Esophagus squamous epithelium (tissue), 5 donors: ENCODE measurements at regions of chr5 and their contacts with region 1.

Region 1: GRCh38 chr5:169980418-169981053 is at the start of gene INSYN2B:
- DNase-seq: no peak
- H3K4me3 ChIP-seq: peak within 1 kb of the TSS in 1 of 4 donors; percentile 45
- H3K27ac ChIP-seq: no peak within 1 kb of the TSS
- H3K4me1 ChIP-seq: peaks cover 0 to 5% (median 4%) of the 10 kb centered on the region in 3 donors
- H3K27me3 ChIP-seq: peaks cover 0 to 36% (median 0%) of the 10 kb centered on the region in 4 donors
- CTCF ChIP-seq: peak in 5 of 6 experiments; percentile 30 to 54 (median 49)
- POLR2A ChIP-seq: no peak
- total RNA-seq, gene INSYN2B: 0.09 TPM in 1 of 4 donors, not detected in the others

Region 2: DNA sequence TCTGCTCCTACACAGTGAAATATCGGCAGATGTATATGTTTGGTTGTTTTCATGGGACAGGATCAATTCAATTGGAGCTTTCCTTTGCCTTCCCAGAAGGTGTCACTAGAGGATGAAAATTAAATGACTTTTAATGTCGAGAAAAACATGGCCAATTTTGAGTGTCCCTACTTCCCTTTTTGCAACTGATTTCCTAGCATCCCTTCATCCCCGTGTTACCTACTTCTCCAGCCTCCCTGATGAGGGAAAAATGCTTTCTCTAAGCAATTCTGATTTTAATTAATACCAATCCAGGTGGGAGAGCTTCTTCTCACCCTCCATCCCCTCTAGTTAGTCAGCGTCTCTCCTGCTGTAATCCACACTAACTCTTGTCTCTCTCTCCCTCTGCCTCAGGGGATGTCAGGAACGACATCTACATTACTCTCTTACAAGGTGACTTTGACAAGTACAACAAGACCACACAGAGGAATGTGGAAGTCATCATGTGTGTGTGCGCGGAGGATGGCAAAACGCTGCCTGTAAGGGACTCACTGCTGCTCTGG is 278.6 kb before region 1 on chr5:
- intact Hi-C with region 1: loop called (anchors 10 kb)
- DNase-seq: no peak
- H3K4me3 ChIP-seq: no peak overlapping the region
- H3K27ac ChIP-seq: no peak overlapping the region
- H3K4me1 ChIP-seq: no peaks in the 10 kb centered on the region
- H3K27me3 ChIP-seq: no peaks in the 10 kb centered on the region
- CTCF ChIP-seq: peak in 2 of 6 experiments; percentile 17 to 35
- POLR2A ChIP-seq: no peak

Region 3: DNA sequence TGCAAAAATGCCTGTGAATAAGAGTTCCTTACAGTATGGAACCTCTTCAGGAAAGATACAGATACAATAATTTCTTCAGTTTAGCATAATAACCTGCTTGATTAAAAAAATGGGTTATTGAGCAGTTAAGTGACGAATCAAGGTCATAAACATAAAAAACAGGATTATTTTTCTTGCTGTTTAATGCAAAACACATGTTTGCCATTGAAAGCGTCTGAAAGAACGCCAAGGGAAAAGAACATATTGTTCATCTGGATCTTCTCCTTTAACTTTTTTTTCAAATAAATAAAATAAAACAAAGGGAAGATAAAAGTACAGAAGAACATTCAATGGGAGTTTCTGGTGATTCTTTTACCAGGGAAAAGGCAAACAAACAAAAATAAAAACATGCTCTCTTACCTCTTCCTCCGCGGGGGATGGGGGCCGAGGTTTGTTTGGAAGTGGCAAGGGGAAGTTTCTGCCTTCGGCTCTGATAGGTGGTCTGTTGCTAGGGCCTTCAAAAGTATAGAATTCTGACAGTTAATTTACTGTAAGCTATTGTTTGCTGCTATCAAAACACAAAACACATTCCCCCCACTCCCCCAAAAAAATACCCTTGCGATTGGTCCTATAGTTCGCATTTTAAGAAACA is 272.3 kb after region 1 on chr5:
- intact Hi-C with region 1: no loop called
- DNase-seq: no peak
- H3K4me3 ChIP-seq: no peak overlapping the region
- H3K27ac ChIP-seq: no peak overlapping the region
- H3K4me1 ChIP-seq: peaks cover 0 to 64% (median 15%) of the 10 kb centered on the region in 3 donors
- H3K27me3 ChIP-seq: peaks cover 0 to 29% (median 0%) of the 10 kb centered on the region in 4 donors
- CTCF ChIP-seq: no peak
- POLR2A ChIP-seq: no peak